ENCODE measurements at regions of chr12 and their contacts with region 1.

Region 1: DNA sequence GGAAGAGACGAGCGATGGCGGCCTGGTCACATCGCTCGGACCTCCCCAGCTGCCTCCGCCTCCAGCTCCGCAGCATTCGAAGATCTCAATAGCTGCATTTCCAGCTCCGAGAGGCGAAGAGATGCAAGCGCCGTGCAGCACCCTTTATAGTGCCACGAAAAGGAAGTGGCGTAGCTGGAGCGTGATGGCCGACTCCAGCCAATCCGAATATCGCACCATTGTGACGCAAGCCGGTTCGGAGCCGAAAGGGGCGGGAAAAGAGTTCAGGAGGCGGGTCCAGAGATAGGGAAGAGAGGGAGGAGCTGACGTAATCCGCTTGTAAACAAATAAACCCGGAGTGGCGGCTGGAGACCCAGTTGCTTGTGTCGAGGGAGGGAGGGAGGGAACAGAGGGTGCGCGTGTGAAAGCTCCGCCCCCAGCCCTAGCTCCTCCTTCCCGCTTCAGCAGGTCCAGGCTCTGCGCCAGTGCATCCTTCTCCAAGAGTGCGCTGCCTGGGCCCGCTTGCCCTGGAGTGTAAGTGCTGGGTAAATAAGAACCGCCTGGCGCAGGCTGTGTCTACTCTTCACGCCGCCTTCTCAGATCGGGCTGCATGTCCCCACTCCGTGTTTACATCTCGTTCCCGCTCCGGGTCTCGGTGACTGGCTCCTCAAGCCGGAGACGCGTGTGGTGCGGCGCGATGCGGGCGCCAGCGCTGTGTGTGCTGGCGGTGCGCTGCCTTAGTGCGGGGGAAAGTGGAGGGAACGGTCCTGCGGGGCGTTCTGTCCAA is at the start of gene BTG1:
- DNase-seq: peak; percentile 87 to 100 (median 100)
- ATAC-seq: peak; percentile 68 to 72
- H3K4me3 Mint-ChIP-seq: peak within 1 kb of the TSS; percentile 89 to 100 (median 100)
- H3K27ac Mint-ChIP-seq: peak within 1 kb of the TSS; percentile 91 to 100 (median 99)
- H3K4me1 Mint-ChIP-seq: peaks cover 20 to 38% (median 30%) of the 10 kb centered on the region in 4 donors
- H3K27me3 Mint-ChIP-seq: peaks cover 0 to 4% (median 0%) of the 10 kb centered on the region in 5 donors
- polyA plus RNA-seq, gene BTG1: 705 to 889 (median 719) TPM

Region 2: DNA sequence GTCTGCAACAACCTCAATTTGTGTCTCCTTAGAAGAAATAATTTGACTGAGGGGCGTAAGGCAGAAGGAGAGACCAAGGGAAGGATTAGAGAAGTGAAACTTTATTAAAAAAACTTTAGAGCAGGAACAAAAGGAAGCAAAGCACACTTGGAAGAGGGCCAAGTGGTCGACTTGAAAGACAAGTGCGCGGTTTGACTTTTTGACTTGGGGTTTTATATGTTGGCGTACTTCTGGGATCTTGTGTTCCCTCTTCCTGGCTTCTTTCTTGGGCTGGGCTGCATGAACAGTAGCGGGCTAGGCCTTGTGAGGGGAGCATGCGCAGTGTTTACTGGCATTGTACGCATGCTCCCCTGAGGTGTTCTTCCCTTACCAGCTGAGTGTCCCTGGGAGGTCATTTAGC is 594.0 kb before region 1 on chr12:
- POLR2A ChIA-PET with region 1: no interaction called
- DNase-seq: peak in 2 of 10 donors; percentile 6 to 13
- ATAC-seq: no peak
- H3K4me3 Mint-ChIP-seq: peak overlapping the region in 1 of 10 donors; percentile 30
- H3K27ac Mint-ChIP-seq: no peak overlapping the region
- H3K4me1 Mint-ChIP-seq: peaks cover 0 to 9% (median 3%) of the 10 kb centered on the region in 4 donors
- H3K27me3 Mint-ChIP-seq: peaks cover 0 to 6% (median 3%) of the 10 kb centered on the region in 5 donors

Region 3: GRCh38 chr12:91778938-91779400 is 366.9 kb before region 1 on chr12:
- POLR2A ChIA-PET with region 1: interaction called, 10 read pairs
- DNase-seq: peak in 7 of 10 donors; percentile 6 to 44 (median 20)
- ATAC-seq: peak; percentile 78 to 79
- H3K4me3 Mint-ChIP-seq: peak overlapping the region; percentile 61 to 84 (median 78)
- H3K27ac Mint-ChIP-seq: peak overlapping the region; percentile 89 to 96 (median 92)
- H3K4me1 Mint-ChIP-seq: peaks cover 11 to 45% (median 37%) of the 10 kb centered on the region in 4 donors
- H3K27me3 Mint-ChIP-seq: no peaks in the 10 kb centered on the region

Region 4: GRCh38 chr12:91991399-91992187 is 154.3 kb before region 1 on chr12:
- POLR2A ChIA-PET with region 1: interaction called, 81 read pairs
- DNase-seq: peak in 3 of 10 donors; percentile 34 to 46 (median 43)
- ATAC-seq: peak; percentile 70 to 75
- H3K4me3 Mint-ChIP-seq: peak overlapping the region in 3 of 10 donors; percentile 0 to 42 (median 23)
- H3K27ac Mint-ChIP-seq: peak overlapping the region in 9 of 10 donors; percentile 34 to 86 (median 60)
- H3K4me1 Mint-ChIP-seq: peaks cover 18 to 62% (median 54%) of the 10 kb centered on the region in 4 donors
- H3K27me3 Mint-ChIP-seq: no peaks in the 10 kb centered on the region

Region 5: GRCh38 chr12:92047393-92047826 is 98.5 kb before region 1 on chr12:
- POLR2A ChIA-PET with region 1: interaction called, 283 read pairs
- DNase-seq: no peak
- ATAC-seq: peak; percentile 72 to 84
- H3K4me3 Mint-ChIP-seq: peak overlapping the region; percentile 31 to 78 (median 72)
- H3K27ac Mint-ChIP-seq: peak overlapping the region; percentile 64 to 95 (median 89)
- H3K4me1 Mint-ChIP-seq: peaks cover 21 to 73% (median 69%) of the 10 kb centered on the region in 4 donors
- H3K27me3 Mint-ChIP-seq: no peaks in the 10 kb centered on the region

Region 6: DNA sequence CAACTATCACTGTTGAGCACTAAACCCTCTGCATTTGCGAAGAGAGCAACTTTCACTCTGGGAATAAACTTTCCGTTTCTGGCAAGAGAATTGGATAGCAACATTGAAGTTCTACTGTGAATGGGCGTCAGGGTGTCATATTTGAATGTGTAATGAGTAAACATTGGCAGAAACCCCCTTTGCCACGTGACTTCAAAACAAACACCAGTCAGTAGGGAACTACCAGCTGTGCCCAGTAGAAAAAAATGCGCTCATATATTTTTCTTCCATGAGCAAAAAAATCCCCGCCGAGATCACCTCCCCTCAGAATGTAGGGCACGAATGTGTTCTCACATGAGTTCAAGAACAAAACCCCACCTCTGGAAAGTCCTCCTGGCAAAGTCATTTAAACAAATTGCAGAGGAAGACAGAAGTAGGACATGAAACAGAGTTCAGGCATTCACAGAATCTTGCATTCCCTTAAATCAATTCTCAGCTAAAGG is 80.9 kb before region 1 on chr12:
- POLR2A ChIA-PET with region 1: no interaction called
- DNase-seq: peak in 5 of 10 donors; percentile 14 to 49 (median 34)
- ATAC-seq: peak; percentile 74 to 86
- H3K4me3 Mint-ChIP-seq: peak overlapping the region in 9 of 10 donors; percentile 11 to 73 (median 45)
- H3K27ac Mint-ChIP-seq: peak overlapping the region in 7 of 10 donors; percentile 1 to 79 (median 60)
- H3K4me1 Mint-ChIP-seq: peaks cover 29 to 73% (median 58%) of the 10 kb centered on the region in 4 donors
- H3K27me3 Mint-ChIP-seq: no peaks in the 10 kb centered on the region

Region 7: DNA sequence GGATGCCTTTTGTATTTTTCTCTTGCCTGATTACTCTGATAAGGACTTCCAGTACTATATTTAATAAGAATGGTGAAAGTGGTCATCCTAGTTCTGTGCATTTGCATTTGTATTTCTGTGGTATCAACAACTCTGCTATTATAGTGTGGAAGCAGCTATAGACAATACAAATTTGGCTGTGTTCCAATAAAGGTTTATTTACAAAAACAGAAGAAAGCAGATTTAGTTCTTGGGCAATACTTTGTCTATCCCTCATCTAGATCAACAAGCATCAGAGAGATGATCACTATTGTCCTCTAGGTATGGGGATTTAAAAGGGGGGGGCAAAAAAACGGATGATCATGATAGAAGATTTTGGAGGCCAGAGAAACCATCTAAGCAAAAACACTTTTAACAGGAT is 18.8 kb after region 1 on chr12:
- POLR2A ChIA-PET with region 1: interaction called, 114 read pairs
- DNase-seq: no peak
- ATAC-seq: no peak
- H3K4me3 Mint-ChIP-seq: no peak overlapping the region
- H3K27ac Mint-ChIP-seq: peak overlapping the region in 1 of 10 donors; percentile 45
- H3K4me1 Mint-ChIP-seq: peaks cover 25 to 71% (median 57%) of the 10 kb centered on the region in 4 donors
- H3K27me3 Mint-ChIP-seq: no peaks in the 10 kb centered on the region

Region 8: DNA sequence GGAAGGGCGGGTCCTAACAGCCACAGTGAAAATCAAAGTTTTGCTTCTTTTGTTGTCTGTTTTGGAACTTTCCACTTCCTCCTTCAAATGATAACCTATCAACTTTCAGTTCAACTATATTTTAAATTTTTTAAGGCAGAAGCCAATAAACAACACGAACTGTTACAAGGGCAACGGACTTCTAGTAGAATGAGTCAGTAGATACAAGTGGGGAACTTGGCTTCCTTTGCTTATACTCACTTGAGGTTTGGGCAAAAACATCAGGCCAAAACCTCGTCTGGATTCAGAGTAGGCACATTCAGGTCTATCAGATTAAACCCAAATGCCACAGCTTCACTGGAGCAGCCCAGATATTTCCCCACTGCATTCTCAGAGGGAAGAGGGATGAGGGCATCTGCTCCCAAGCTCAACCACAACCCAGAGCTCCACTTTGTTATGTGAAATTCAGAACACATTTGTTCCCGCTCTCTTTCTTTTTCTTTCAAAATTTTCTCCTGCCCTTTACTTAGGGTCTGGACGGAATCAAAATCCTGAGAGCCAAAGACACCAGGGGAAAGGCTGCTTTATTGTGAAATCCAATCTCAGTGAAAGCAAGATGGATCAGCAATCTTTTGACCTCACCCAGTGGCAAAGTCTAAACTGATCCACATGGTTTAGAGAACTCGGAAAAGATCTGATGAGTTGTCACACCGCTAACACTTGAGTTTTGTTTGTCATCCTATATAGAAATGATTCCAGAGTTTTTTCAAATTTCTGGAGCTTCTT is 152.2 kb after region 1 on chr12:
- POLR2A ChIA-PET with region 1: interaction called, 13 read pairs
- DNase-seq: peak in 5 of 10 donors; percentile 2 to 59 (median 22)
- ATAC-seq: peak; percentile 93 to 96
- H3K4me3 Mint-ChIP-seq: peak overlapping the region; percentile 6 to 76 (median 60)
- H3K27ac Mint-ChIP-seq: peak overlapping the region in 6 of 10 donors; percentile 78 to 91 (median 84)
- H3K4me1 Mint-ChIP-seq: peaks cover 12 to 36% (median 18%) of the 10 kb centered on the region in 4 donors
- H3K27me3 Mint-ChIP-seq: no peaks in the 10 kb centered on the region

Region 9: DNA sequence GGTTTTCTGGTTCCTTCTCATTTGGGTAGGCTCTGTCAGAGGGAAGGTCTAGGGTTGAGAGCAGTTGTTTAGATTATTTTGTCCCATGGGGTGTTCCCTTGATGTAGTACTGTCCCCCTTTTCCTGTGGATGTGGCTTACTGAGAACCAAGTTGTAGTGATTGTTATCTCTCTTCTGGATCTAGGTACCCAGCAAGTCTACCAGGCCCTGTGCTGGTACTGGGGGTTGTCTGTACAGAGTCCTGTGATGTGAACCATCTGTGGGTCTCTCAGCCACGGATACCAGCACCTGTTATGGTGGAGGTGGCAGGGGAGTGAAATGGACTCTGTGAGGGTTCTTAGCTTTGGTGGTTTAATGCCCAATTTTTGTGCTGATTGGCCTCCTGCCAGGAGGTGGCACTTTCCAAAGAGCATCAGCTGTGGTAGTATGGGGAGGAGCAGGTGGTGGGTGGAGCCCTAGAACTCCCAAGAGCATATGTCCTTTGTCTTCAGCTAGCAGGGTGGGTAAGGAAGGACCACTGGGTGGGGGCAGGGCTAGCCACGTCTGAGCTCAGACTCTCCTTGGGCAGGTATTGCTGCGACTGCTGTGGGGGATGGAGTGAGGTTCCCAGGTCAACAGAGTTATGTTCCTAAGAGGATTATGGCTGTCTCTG is 179.1 kb after region 1 on chr12:
- POLR2A ChIA-PET with region 1: no interaction called
- DNase-seq: no peak
- ATAC-seq: no peak
- H3K4me3 Mint-ChIP-seq: peak overlapping the region in 5 of 10 donors; percentile 15 to 43 (median 31)
- H3K27ac Mint-ChIP-seq: peak overlapping the region in 5 of 10 donors; percentile 27 to 92 (median 72)
- H3K4me1 Mint-ChIP-seq: peaks cover 22 to 49% (median 28%) of the 10 kb centered on the region in 4 donors
- H3K27me3 Mint-ChIP-seq: no peaks in the 10 kb centered on the region

Region 10: DNA sequence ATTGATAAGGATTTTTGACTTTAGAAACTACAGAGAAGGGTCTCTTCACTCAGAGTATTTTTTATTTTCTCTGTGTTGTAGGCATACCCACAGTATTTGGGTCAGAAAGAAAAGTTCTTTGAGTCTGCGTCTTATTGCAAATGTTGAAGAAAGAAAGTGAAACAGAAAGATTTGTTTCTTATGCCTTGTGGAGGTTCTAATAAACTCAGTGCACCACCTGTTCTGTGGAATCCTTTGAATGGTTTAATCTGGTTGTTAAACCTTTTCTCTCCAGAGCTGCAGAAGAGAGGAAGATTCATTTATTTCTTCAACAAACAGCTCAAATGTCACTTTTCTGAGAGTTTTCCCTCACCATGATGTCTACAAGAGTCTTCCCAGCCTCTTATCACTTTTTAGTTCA is 410.2 kb after region 1 on chr12:
- POLR2A ChIA-PET with region 1: interaction called, 12 read pairs
- DNase-seq: peak in 3 of 10 donors; percentile 30 to 49 (median 40)
- ATAC-seq: peak; percentile 73 to 86
- H3K4me3 Mint-ChIP-seq: peak overlapping the region; percentile 57 to 83 (median 74)
- H3K27ac Mint-ChIP-seq: peak overlapping the region; percentile 79 to 96 (median 90)
- H3K4me1 Mint-ChIP-seq: peaks cover 11 to 33% (median 20%) of the 10 kb centered on the region in 4 donors
- H3K27me3 Mint-ChIP-seq: no peaks in the 10 kb centered on the region